CD4-positive, alpha-beta memory T cell (primary cell): ENCODE measurements at regions of chr12 and their contacts with region 1.

Region 1: GRCh38 chr12:88998421-88998820 is 353.9 kb downstream of the DUSP6 start:
- DNase-seq: no peak
- H3K4me3 ChIP-seq: no peak overlapping the region
- H3K4me3 Mint-ChIP-seq: no peak overlapping the region
- H3K27ac ChIP-seq: no peak overlapping the region
- H3K27ac Mint-ChIP-seq: no peak overlapping the region
- H3K4me1 ChIP-seq: no peaks in the 10 kb centered on the region
- H3K4me1 Mint-ChIP-seq: no peaks in the 10 kb centered on the region
- H3K27me3 ChIP-seq: no peaks in the 10 kb centered on the region
- H3K27me3 Mint-ChIP-seq: peaks cover 12 to 17% of the 10 kb centered on the region in 2 donors

Region 2: DNA sequence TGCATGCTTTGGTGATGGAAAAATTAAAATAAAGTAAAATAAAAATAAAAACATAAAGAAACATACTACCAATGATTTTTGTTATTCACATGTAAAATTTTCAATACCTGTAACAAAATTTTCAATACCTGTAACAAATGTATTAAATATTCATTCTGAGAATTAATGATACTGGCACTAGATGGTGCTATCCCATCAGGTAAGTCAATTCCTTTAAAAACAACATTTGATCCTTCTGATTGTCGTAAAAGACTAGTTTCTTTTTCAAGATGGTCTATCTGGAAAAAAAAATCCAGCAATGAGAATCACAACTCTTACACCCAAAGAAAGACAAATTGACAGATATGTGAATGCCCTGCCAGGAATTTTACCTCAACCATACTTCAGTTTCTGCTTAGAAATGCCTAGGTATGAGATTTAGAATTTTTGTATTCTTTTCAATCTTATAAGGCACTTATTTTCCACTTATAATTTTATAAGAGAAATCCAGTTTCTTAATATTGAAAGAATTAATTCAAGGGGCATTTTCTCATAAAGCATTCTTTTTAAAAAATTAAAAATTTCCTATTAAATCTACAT is 887.3 kb before region 1 on chr12:
- CTCF ChIA-PET with region 1: no interaction called
- POLR2A ChIA-PET with region 1: no interaction called
- intact Hi-C with region 1: loop called (anchors 5 kb)
- DNase-seq: peak in 4 of 5 donors; percentile 16 to 27 (median 22)
- H3K4me3 ChIP-seq: no peak overlapping the region
- H3K4me3 Mint-ChIP-seq: peak overlapping the region in 7 of 8 donors; percentile 45 to 77 (median 64)
- H3K27ac ChIP-seq: no peak overlapping the region
- H3K27ac Mint-ChIP-seq: peak overlapping the region in 3 of 7 donors; percentile 43 to 84 (median 75)
- H3K4me1 ChIP-seq: no peaks in the 10 kb centered on the region
- H3K4me1 Mint-ChIP-seq: peaks cover 2 to 5% (median 3%) of the 10 kb centered on the region in 4 donors
- H3K27me3 ChIP-seq: no peaks in the 10 kb centered on the region
- H3K27me3 Mint-ChIP-seq: no peaks in the 10 kb centered on the region

Region 3: GRCh38 chr12:88935856-88936255 is 62.6 kb before region 1 on chr12:
- CTCF ChIA-PET with region 1: no interaction called
- POLR2A ChIA-PET with region 1: no interaction called
- intact Hi-C with region 1: no loop called
- DNase-seq: no peak
- H3K4me3 ChIP-seq: no peak overlapping the region
- H3K4me3 Mint-ChIP-seq: no peak overlapping the region
- H3K27ac ChIP-seq: no peak overlapping the region
- H3K27ac Mint-ChIP-seq: no peak overlapping the region
- H3K4me1 ChIP-seq: no peaks in the 10 kb centered on the region
- H3K4me1 Mint-ChIP-seq: no peaks in the 10 kb centered on the region
- H3K27me3 ChIP-seq: no peaks in the 10 kb centered on the region
- H3K27me3 Mint-ChIP-seq: peaks cover 1 to 4% of the 10 kb centered on the region in 2 donors

Region 4: GRCh38 chr12:88946372-88946997 is 51.9 kb before region 1 on chr12:
- CTCF ChIA-PET with region 1: no interaction called
- POLR2A ChIA-PET with region 1: no interaction called
- intact Hi-C with region 1: no loop called
- DNase-seq: no peak
- H3K4me3 ChIP-seq: no peak overlapping the region
- H3K4me3 Mint-ChIP-seq: no peak overlapping the region
- H3K27ac ChIP-seq: no peak overlapping the region
- H3K27ac Mint-ChIP-seq: no peak overlapping the region
- H3K4me1 ChIP-seq: no peaks in the 10 kb centered on the region
- H3K4me1 Mint-ChIP-seq: no peaks in the 10 kb centered on the region
- H3K27me3 ChIP-seq: no peaks in the 10 kb centered on the region
- H3K27me3 Mint-ChIP-seq: peaks cover 5 to 10% of the 10 kb centered on the region in 2 donors